CD4-positive, alpha-beta memory T cell (primary cell): ENCODE measurements at regions of chr19 and their contacts with region 1.

Region 1: GRCh38 chr19:7799640-7800355 is 30.2 kb upstream of the EVI5L start:
- DNase-seq: peak in 4 of 5 donors; percentile 32 to 62 (median 42)
- H3K4me3 ChIP-seq: no peak overlapping the region
- H3K4me3 Mint-ChIP-seq: peak overlapping the region in 2 of 8 donors; percentile 3 to 62
- H3K27ac ChIP-seq: no peak overlapping the region
- H3K27ac Mint-ChIP-seq: peak overlapping the region in 2 of 7 donors; percentile 23 to 53
- H3K4me1 ChIP-seq: peaks cover 8% of the 10 kb centered on the region
- H3K4me1 Mint-ChIP-seq: peaks cover 0 to 13% (median 2%) of the 10 kb centered on the region in 4 donors
- H3K27me3 ChIP-seq: peaks cover 6% of the 10 kb centered on the region
- H3K27me3 Mint-ChIP-seq: peaks cover 4 to 22% of the 10 kb centered on the region in 2 donors

Region 2: DNA sequence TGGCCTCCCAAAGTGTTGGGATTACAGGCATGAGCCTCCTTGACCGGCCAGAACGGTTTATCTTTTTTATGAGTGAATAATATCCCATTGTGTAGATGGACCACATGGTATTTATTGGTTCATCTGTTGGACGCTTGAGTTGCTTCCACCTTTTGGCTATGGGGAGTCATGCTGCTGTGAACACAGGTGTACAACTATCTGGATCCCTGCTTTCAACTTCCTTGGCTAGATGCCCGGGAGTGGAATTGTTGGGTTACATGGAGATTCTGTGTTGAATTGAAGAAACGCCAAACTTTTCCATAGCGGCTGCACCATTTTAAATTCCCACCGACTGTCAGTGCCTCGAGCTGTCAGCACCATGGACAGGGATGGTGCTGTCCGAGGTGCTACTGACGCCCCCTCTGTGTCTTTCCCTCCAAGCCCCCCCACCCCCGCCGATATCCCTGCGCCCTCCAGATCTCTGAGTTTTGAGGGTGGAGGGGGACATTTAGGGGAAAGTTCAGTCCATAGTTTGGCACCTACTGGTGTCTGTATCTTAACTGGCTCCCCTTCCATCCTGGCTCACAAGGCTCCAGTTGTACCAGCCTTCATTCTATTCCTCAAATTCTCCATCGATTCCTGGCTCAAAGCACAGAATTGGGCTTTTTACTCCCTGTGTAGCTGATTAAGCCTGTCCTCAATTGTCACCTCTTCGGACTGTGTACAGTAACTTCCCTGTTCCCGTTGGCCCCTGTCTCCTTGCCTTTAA is 237.0 kb before region 1 on chr19:
- CTCF ChIA-PET with region 1: interaction called, 109 read pairs
- POLR2A ChIA-PET with region 1: no interaction called
- intact Hi-C with region 1: loop called (anchors 1 kb)
- DNase-seq: peak in 1 of 5 donors; percentile 5
- H3K4me3 ChIP-seq: no peak overlapping the region
- H3K4me3 Mint-ChIP-seq: no peak overlapping the region
- H3K27ac ChIP-seq: no peak overlapping the region
- H3K27ac Mint-ChIP-seq: no peak overlapping the region
- H3K4me1 ChIP-seq: no peaks in the 10 kb centered on the region
- H3K4me1 Mint-ChIP-seq: no peaks in the 10 kb centered on the region
- H3K27me3 ChIP-seq: no peaks in the 10 kb centered on the region
- H3K27me3 Mint-ChIP-seq: no peaks in the 10 kb centered on the region

Region 3: GRCh38 chr19:7652061-7652641 is 147.6 kb before region 1 on chr19:
- CTCF ChIA-PET with region 1: interaction called, 27 read pairs
- POLR2A ChIA-PET with region 1: no interaction called
- intact Hi-C with region 1: loop called (anchors 1 kb)
- DNase-seq: peak; percentile 86 to 93 (median 88)
- H3K4me3 ChIP-seq: peak overlapping the region in 1 of 2 donors; percentile 46
- H3K4me3 Mint-ChIP-seq: peak overlapping the region; percentile 70 to 88 (median 81)
- H3K27ac ChIP-seq: peak overlapping the region; percentile 31
- H3K27ac Mint-ChIP-seq: peak overlapping the region; percentile 78 to 95 (median 93)
- H3K4me1 ChIP-seq: peaks cover 7% of the 10 kb centered on the region
- H3K4me1 Mint-ChIP-seq: peaks cover 6 to 13% (median 10%) of the 10 kb centered on the region in 4 donors
- H3K27me3 ChIP-seq: no peaks in the 10 kb centered on the region
- H3K27me3 Mint-ChIP-seq: no peaks in the 10 kb centered on the region